ENCODE measurements at regions of chr1 and their contacts with region 1.

Region 1: DNA sequence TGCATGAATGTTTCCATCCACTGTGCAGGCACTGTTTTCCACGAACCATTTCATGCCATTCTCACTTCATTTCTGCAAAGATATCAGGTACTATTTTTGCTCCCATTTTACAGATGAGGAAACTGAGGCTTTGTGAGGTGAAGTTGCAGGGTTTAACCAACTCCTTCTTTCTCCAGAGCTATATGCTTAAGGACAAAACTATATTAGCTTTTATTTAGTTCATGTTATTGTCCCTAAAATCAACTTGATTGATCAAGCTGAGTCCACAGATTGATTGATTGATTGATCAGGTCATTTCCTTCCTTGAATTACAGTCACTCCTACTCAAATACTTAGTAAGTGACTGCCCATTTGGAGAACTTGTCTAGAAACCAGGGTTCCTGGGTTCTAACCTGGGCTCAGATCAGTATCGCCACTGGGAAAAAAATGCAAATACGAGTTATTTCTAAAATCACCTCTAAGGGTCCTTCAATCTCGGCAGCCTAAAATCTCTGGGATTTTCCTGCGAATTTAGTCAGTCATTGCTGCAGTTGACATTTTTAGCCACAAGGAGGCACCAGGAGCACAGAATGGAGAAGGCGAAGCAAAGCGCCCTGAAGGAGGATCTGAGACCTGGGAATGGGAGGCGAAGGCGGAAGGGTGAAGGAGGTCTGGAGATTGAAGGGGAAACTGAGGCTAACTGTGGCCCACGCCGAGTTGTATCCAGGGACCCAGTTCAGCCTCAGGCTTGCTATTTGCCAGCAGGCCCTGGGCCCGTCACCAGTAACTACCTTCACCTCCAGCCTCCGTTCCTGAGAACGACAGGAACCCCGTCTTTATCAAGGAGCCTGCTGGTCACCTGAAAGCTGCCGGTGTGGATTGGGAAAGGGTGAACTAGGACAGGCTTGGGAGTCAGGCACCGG is 14.3 kb upstream of the MUL1 start:
- DNase-seq: peak; percentile 42 to 82
- ATAC-seq: peak; percentile 58 to 81 (median 72)
- H3K4me3 ChIP-seq: peak overlapping the region in 1 of 10 donors; percentile 17
- H3K27ac ChIP-seq: no peak overlapping the region
- H3K4me1 ChIP-seq: peaks cover 0 to 7% (median 0%) of the 10 kb centered on the region in 9 donors
- H3K27me3 ChIP-seq: peaks cover 0 to 15% (median 0%) of the 10 kb centered on the region in 7 donors
- CTCF ChIP-seq: peak; percentile 82 to 94 (median 90)

Region 2: DNA sequence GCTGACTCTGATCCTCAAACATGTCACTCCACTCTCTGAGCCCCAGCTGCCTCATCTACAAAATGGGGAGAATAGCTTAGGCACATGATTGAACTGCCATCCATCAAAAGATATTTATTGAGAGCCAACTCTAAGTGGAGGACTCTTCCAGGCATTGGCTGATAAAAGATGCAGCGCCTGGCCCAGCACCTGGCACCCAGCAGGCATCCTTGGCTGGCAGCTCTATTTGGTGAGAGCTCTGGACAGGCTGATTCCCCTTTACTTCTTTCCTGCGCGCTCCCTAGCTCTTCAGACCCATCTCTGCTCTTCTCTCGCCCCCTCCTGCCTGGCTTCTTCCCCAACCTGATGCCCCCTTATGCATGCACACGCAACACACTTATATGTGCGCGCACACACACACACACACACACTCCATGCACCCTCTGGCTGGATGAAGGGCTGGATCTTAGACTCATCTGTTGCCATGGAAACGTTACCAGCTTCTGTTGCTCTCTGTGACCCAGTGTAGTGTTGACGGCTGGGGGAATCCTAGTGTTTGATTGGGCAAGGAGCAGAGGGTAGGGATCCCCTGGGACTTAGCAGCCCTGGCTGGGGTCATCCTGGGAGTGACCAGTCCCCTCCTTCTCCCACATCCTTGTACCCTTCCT is 182.3 kb before region 1 on chr1:
- intact Hi-C with region 1: no loop called
- DNase-seq: no peak
- ATAC-seq: no peak
- H3K4me3 ChIP-seq: no peak overlapping the region
- H3K27ac ChIP-seq: no peak overlapping the region
- H3K4me1 ChIP-seq: peaks cover 0 to 6% (median 0%) of the 10 kb centered on the region in 9 donors
- H3K27me3 ChIP-seq: peaks cover 0 to 31% (median 28%) of the 10 kb centered on the region in 7 donors
- CTCF ChIP-seq: no peak

Region 3: GRCh38 chr1:20466273-20466672 is 55.9 kb before region 1 on chr1:
- intact Hi-C with region 1: no loop called
- DNase-seq: no peak
- ATAC-seq: no peak
- H3K4me3 ChIP-seq: no peak overlapping the region
- H3K27ac ChIP-seq: no peak overlapping the region
- H3K4me1 ChIP-seq: peaks cover 0 to 6% (median 0%) of the 10 kb centered on the region in 9 donors
- H3K27me3 ChIP-seq: peaks cover 0 to 24% (median 6%) of the 10 kb centered on the region in 7 donors
- CTCF ChIP-seq: no peak

Region 4: DNA sequence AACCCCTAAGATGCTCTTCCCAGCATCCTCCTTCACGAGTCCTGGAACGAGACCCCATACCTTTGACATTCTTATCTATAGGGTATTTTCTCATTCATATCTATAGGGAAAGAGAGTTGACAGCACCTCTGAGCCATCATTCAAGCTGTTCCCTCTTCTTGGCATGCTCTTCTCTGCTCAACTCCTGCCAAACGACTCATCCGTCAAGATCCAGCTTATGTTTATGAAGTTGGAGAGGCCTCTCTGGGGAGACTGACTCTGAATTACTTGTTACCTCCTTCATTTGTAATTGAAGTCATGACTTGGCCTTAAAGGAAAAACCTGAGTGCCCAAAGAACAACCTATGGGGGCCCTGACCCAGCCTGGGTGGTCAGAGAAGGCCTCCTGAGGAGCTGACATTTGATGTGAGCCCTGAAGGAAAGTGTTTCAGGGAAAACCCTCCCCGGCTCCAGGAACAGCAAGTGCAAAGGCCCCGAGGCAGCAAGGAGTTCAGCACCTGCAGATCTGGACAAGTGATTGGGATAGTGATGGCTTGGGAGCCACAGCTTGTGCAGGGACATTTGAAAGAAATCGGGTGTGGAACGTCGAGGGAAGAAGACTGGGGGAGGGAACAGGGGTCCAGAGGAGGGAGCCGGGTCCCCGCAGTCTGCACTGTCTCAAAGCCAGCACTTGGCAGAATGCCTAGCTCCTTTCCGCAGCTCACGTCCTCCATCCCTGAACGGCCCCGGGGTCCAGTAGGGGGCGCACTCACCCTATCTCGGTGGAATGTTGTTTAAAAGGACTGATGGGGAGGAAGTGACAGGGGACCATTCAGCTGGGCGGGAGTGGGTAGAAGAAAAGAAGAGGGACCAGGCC is 52.7 kb after region 1 on chr1:
- intact Hi-C with region 1: loop called in 3 of 10 experiments (anchors 5 to 10 kb)
- DNase-seq: peak; percentile 87 to 88
- ATAC-seq: peak; percentile 91 to 97 (median 96)
- H3K4me3 ChIP-seq: no peak overlapping the region
- H3K27ac ChIP-seq: no peak overlapping the region
- H3K4me1 ChIP-seq: peaks cover 0 to 5% (median 0%) of the 10 kb centered on the region in 9 donors
- H3K27me3 ChIP-seq: peaks cover 0 to 12% (median 2%) of the 10 kb centered on the region in 7 donors
- CTCF ChIP-seq: peak; percentile 62 to 89 (median 75)

Region 5: GRCh38 chr1:20633190-20634064 is 111.2 kb after region 1 on chr1 and contains the start of gene PINK1:
- intact Hi-C with region 1: loop called in 8 of 10 experiments (anchors 2 to 5 kb)
- DNase-seq: peak; percentile 76 to 85
- ATAC-seq: peak; percentile 84 to 95 (median 94)
- H3K4me3 ChIP-seq: peak within 1 kb of the TSS; percentile 89 to 100 (median 96)
- H3K27ac ChIP-seq: peak within 1 kb of the TSS; percentile 93 to 99 (median 98)
- H3K4me1 ChIP-seq: peaks cover 2 to 38% (median 27%) of the 10 kb centered on the region in 9 donors
- H3K27me3 ChIP-seq: peaks cover 0 to 4% (median 0%) of the 10 kb centered on the region in 7 donors
- CTCF ChIP-seq: peak; percentile 95 to 100 (median 99)
- total RNA-seq, gene PINK1: 180 to 315 (median 244) TPM

Region 6: DNA sequence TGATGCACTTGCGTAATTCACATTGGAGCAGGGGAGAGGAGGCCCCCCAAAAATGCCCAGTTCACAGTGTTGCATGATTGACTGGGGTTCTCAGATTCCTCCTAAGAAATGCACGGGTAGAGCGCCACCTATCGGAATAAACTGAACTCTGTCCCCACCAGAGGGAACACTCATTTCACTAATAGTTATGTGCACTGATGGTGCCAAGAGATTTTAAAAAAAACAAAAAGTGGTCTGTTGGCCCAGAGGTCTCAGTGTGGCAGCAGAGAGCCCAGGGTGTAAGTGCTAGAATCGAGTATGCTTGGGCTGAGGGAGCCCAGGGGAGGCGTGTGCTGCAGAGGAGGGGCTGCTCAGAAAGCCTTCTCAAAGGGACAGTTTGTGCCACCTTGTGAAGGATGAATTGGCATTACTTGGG is 118.0 kb after region 1 on chr1:
- intact Hi-C with region 1: loop called in 9 of 10 experiments (anchors 2 to 5 kb)
- DNase-seq: peak in 1 of 2 donors; percentile 37
- ATAC-seq: peak in 7 of 8 donors; percentile 39 to 69 (median 63)
- H3K4me3 ChIP-seq: no peak overlapping the region
- H3K27ac ChIP-seq: no peak overlapping the region
- H3K4me1 ChIP-seq: peaks cover 2 to 25% (median 11%) of the 10 kb centered on the region in 9 donors
- H3K27me3 ChIP-seq: no peaks in the 10 kb centered on the region
- CTCF ChIP-seq: peak; percentile 74 to 87 (median 83)

Region 7: DNA sequence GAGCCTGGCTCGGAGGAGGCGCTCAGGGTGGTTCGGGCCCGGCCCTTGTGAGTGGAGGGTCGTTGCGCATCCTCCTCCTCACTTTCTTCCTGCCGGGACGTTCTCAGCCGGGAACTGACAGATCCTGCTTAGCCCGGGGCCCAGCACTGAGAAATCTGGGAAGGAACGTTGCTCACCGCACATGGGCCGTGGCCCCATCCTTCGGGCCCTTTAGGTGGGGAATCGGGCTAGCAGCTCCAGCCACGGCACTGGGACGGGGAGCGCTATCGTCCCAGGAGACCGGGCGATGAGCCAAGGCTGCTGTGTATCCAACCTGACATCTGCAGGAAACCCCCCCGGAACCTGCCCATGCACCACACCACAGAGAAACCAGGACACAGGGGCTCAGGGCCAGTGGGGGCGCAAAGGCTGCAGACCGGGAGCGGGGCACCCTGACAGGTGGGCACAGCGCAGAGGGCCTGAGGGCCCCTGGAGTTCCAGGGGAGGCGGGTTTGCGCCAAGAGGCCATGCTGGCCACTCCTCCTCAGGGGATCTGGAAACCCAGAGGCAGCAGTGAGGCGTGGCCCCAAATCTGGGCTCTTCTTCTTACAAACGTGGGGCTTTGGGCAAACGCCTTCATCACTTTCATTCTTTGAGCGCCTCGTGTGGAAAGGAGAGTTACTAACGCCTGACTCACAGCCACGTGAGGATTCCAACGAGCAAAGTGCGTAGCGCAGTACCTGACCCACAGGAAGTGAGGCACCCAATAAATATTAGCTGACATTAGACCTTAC is 210.6 kb after region 1 on chr1 and contains the start of gene SH2D5:
- intact Hi-C with region 1: loop called in 2 of 10 experiments (anchors 10 kb)
- DNase-seq: peak in 1 of 2 donors; percentile 48
- ATAC-seq: peak; percentile 36 to 80 (median 74)
- H3K4me3 ChIP-seq: peak within 1 kb of the TSS; percentile 50 to 65 (median 60)
- H3K27ac ChIP-seq: peak within 1 kb of the TSS in 3 of 10 donors; percentile 10 to 25 (median 19)
- H3K4me1 ChIP-seq: peaks cover 9 to 23% (median 21%) of the 10 kb centered on the region in 9 donors
- H3K27me3 ChIP-seq: peaks cover 0 to 58% (median 40%) of the 10 kb centered on the region in 7 donors
- CTCF ChIP-seq: peak in 7 of 9 donors; percentile 15 to 54 (median 38)
- total RNA-seq, gene SH2D5: 0.15 to 0.21 (median 0.20) TPM in 3 of 10 donors, not detected in the others

Measured in heart right ventricle (tissue), 16 donors.